Heart left ventricle (tissue), 16 donors: ENCODE measurements at regions of chr2 and their contacts with region 1.

Region 1: DNA sequence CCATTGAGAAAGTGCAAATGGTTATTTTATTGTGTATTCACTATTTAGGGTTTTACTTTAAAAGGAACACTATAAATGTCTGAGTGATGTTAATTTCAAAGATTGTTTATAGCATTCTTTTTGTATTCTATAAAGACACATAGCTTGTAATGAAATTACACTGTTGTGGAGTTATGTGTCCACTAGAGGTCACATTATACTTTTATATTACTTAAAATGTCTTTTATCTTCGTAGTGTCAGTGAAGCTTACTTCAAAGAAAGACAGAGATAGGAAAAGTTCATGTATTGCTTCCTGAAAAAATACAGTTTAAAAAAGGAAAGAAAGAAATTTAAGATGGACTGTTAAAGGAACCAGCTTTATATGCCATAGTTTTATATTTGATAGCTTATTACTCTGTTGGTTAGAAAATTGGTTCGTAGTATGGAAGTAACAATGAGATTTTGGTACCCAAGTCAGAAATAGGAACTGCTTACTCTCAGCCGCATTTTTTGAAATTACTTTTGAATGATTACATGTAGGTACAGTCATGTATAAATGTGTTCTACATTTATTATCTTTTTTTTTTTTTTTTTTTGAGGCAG is 20.5 kb downstream of the APLF start:
- DNase-seq: no peak
- ATAC-seq: no peak
- H3K4me3 ChIP-seq: no peak overlapping the region
- H3K27ac ChIP-seq: no peak overlapping the region
- H3K4me1 ChIP-seq: peaks cover 0 to 3% (median 0%) of the 10 kb centered on the region in 12 donors
- H3K27me3 ChIP-seq: no peaks in the 10 kb centered on the region
- CTCF ChIP-seq: peak; percentile 37 to 70 (median 54)
- POLR2A ChIP-seq: no peak

Region 2: GRCh38 chr2:68594674-68595492 is 107.0 kb after region 1 on chr2:
- intact Hi-C with region 1: loop called in 7 of 10 experiments (anchors 5 to 10 kb)
- DNase-seq: peak in 3 of 5 donors; percentile 26 to 47 (median 29)
- ATAC-seq: peak in 2 of 4 donors; percentile 59 to 76
- H3K4me3 ChIP-seq: peak overlapping the region in 7 of 12 donors; percentile 3 to 36 (median 12)
- H3K27ac ChIP-seq: peak overlapping the region in 7 of 12 donors; percentile 17 to 65 (median 48)
- H3K4me1 ChIP-seq: peaks cover 0 to 10% (median 0%) of the 10 kb centered on the region in 12 donors
- H3K27me3 ChIP-seq: no peaks in the 10 kb centered on the region
- CTCF ChIP-seq: peak; percentile 66 to 84 (median 78)
- POLR2A ChIP-seq: no peak

Region 3: DNA sequence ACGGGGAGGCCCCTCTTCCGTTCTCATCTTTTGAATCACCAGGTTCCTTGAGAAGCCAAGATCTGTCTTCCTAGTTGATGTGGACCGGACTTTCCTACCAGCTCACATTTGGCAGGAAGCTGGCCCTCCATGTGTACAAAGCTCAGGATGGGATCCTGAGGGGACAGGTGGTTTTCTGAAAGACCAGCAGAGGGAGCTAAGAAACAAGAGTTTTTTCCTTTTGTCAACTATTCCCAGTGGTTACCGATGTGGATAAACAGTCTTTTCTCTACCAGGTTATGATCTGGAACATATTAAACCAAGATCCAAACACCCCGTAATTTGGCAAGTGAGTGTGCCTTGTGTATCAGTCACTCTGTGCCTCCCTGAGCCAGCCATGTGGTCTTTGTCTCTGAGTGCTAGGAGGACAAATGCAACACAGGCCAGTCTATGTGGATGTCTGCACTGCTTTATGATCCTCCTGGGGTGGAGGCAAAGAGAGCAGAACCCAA is 221.6 kb after region 1 on chr2:
- intact Hi-C with region 1: loop called in 4 of 10 experiments (anchors 5 to 10 kb)
- DNase-seq: peak in 1 of 5 donors; percentile 15
- ATAC-seq: peak in 3 of 4 donors; percentile 69 to 77 (median 74)
- H3K4me3 ChIP-seq: no peak overlapping the region
- H3K27ac ChIP-seq: no peak overlapping the region
- H3K4me1 ChIP-seq: peaks cover 0 to 9% (median 0%) of the 10 kb centered on the region in 12 donors
- H3K27me3 ChIP-seq: peaks cover 0 to 2% (median 0%) of the 10 kb centered on the region in 9 donors
- CTCF ChIP-seq: peak; percentile 62 to 80 (median 70)
- POLR2A ChIP-seq: no peak

Region 4: DNA sequence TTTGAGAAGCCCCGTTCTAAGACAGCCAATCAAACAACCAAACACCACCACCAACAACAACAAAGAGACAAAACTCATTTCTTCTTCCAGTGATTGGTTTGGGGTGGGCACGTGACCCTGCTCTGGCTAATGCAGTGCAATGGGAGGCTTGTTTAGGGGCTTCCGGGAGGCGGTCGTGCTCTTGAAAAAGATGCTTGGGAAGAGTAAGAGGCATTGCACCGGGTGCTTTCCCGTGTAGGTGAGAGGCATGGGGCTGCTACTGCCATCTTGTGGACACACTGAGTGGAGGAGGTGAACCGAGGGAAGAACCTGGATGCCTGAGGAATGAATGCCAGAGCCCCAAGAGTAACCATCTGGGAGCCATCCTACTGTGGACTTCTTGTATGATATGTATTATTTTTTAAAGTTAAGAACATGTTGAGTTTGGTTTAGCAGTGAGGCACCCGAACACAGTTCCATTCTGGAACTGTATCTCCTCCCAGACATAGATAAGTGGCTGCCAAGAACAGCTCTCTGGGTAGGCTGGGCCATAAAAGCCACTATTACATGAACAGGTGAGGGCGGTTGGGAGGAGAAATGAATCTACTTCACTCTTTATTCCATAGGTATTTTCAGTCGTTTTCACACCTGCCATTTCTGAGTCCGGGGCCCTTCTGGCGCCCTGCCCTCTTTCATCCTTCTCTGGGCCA is 227.6 kb after region 1 on chr2:
- intact Hi-C with region 1: loop called in 3 of 10 experiments (anchors 5 to 10 kb)
- DNase-seq: peak in 2 of 5 donors; percentile 49 to 52
- ATAC-seq: peak in 3 of 4 donors; percentile 62 to 71 (median 68)
- H3K4me3 ChIP-seq: no peak overlapping the region
- H3K27ac ChIP-seq: peak overlapping the region in 1 of 12 donors; percentile 88
- H3K4me1 ChIP-seq: peaks cover 0 to 35% (median 0%) of the 10 kb centered on the region in 12 donors
- H3K27me3 ChIP-seq: peaks cover 0 to 6% (median 0%) of the 10 kb centered on the region in 9 donors
- CTCF ChIP-seq: peak; percentile 43 to 72 (median 54)
- POLR2A ChIP-seq: no peak

Region 5: GRCh38 chr2:68918497-68918896 is 430.6 kb after region 1 on chr2:
- intact Hi-C with region 1: loop called in 3 of 10 experiments (anchors 5 to 10 kb)
- DNase-seq: no peak
- ATAC-seq: no peak
- H3K4me3 ChIP-seq: no peak overlapping the region
- H3K27ac ChIP-seq: no peak overlapping the region
- H3K4me1 ChIP-seq: no peaks in the 10 kb centered on the region
- H3K27me3 ChIP-seq: no peaks in the 10 kb centered on the region
- CTCF ChIP-seq: no peak
- POLR2A ChIP-seq: no peak

Region 6: DNA sequence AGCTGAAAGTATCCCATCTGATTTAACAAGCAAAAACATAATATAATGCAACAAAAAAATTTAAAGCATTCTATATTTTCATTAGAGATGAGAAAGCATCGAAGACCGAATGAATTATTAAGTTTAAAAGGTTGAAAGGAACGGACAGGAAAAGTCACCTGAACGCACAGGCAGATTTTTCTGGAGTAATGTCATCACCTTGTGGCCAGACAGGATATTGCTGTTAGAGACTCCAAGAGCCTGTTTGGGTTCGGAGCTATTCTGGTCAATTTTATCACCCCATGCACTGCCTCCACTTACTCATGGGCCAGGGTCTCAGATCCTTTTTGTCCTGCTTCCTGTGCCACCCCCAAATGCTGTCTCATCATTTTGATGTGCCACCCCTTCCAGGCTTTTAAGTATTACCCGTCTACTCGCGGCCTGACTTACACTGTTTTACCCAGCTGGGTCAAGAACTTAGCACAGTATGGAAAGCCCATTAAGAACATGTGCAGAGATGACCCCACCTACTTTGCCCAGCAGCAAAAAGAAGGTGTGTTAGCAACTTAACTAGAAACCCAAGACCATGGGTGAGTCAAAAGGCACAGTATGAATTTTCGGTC is 437.5 kb after region 1 on chr2:
- intact Hi-C with region 1: loop called in 5 of 10 experiments (anchors 5 to 10 kb)
- DNase-seq: no peak
- ATAC-seq: peak in 3 of 4 donors; percentile 57 to 65 (median 62)
- H3K4me3 ChIP-seq: no peak overlapping the region
- H3K27ac ChIP-seq: no peak overlapping the region
- H3K4me1 ChIP-seq: no peaks in the 10 kb centered on the region
- H3K27me3 ChIP-seq: peaks cover 0 to 13% (median 0%) of the 10 kb centered on the region in 9 donors
- CTCF ChIP-seq: peak; percentile 74 to 92 (median 82)
- POLR2A ChIP-seq: no peak